GM10248 (cell line): ENCODE measurements at regions of chr17 and their contacts with region 1.

Region 1: GRCh38 chr17:76557368-76558197 is 17.7 kb downstream of the PRCD start:
- DNase-seq: peak; percentile 92
- CTCF ChIP-seq: peak; percentile 20

Region 2: GRCh38 chr17:76547184-76547641 is 10.4 kb before region 1 on chr17:
- CTCF ChIA-PET with region 1: interaction called, 34 read pairs
- POLR2A ChIA-PET with region 1: no interaction called
- DNase-seq: peak; percentile 72
- CTCF ChIP-seq: peak; percentile 55

Region 3: GRCh38 chr17:76567634-76568432 is 10.2 kb after region 1 on chr17:
- CTCF ChIA-PET with region 1: interaction called, 60 read pairs
- POLR2A ChIA-PET with region 1: interaction called, 10 read pairs
- DNase-seq: no peak
- CTCF ChIP-seq: no peak